Endothelial cell of umbilical vein (primary cell): ENCODE measurements at regions of chr6 and their contacts with region 1.

Region 1: GRCh38 chr6:151044465-151045441 is 179.3 kb downstream of the MTHFD1L start:
- DNase-seq: peak; percentile 97
- H3K4me3 ChIP-seq: no peak overlapping the region
- H3K27ac ChIP-seq: peak overlapping the region; percentile 100
- H3K4me1 ChIP-seq: peaks cover 49% of the 10 kb centered on the region
- H3K27me3 ChIP-seq: no peaks in the 10 kb centered on the region
- CTCF ChIP-seq: no peak
- POLR2A ChIP-seq: peak; percentile 44

Region 2: DNA sequence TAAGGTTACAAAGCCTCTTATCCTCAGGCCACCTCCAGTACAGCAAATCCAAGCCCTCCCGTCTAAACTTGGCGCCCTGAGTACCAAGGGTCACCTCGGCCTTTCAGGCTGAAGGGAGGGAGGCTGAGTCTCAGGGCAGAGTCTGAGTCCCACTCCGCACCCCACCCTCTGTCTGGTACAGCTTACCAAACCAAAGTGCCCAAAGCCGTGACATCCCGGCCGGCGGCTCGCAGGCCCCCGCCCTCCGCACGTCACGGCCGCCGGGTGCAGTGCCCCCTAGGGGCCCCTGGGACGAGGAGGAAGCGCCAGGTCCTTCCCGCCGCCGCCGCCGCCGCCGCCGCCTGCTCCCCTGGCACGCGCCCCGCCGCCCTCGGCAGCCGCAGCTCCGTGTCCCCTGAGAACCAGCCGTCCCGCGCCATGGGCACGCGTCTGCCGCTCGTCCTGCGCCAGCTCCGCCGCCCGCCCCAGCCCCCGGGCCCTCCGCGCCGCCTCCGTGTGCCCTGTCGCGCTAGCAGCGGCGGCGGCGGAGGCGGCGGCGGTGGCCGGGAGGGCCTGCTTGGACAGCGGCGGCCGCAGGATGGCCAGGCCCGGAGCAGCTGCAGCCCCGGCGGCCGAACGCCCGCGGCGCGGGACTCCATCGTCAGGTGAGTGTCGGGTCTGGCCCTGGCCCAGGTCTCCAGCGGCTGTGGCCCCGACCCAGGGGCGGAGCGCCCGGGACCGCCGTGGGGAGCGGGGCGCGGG is 179.2 kb before region 1 on chr6 and contains the start of gene MTHFD1L:
- CTCF ChIA-PET with region 1: no interaction called
- POLR2A ChIA-PET with region 1: no interaction called
- dilution Hi-C with region 1: no loop called
- intact Hi-C with region 1: loop called (anchors 2 kb)
- DNase-seq: peak; percentile 86
- H3K4me3 ChIP-seq: peak within 1 kb of the TSS; percentile 90 to 93 (median 92)
- H3K27ac ChIP-seq: peak within 1 kb of the TSS; percentile 93
- H3K4me1 ChIP-seq: peaks cover 25% of the 10 kb centered on the region
- H3K27me3 ChIP-seq: no peaks in the 10 kb centered on the region
- CTCF ChIP-seq: peak; percentile 58 to 62
- POLR2A ChIP-seq: peak; percentile 60
- total RNA-seq, gene MTHFD1L: 120 and 121 TPM in 2 replicates

Region 3: DNA sequence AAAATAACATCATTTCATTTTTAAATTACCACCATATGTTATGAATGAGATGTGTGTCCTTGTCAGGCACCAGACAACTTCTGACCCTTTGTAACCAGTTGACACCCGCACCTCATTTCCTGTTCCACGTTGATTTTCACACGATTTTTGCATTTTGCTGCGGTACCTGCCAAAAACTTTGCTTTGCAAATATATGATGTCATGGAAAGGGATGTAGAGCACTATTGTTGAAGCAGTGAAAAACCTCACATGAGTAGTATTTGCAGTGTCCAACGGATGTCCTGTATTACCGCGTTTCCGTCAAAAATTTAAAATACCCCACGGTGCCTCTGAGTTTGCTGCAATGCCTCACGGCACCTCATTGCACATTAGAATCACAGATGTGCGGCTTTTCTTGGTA is 63.7 kb before region 1 on chr6:
- CTCF ChIA-PET with region 1: no interaction called
- POLR2A ChIA-PET with region 1: no interaction called
- dilution Hi-C with region 1: no loop called
- intact Hi-C with region 1: loop called (anchors 1 kb)
- DNase-seq: peak; percentile 99
- H3K4me3 ChIP-seq: no peak overlapping the region
- H3K27ac ChIP-seq: peak overlapping the region; percentile 90
- H3K4me1 ChIP-seq: peaks cover 26% of the 10 kb centered on the region
- H3K27me3 ChIP-seq: no peaks in the 10 kb centered on the region
- CTCF ChIP-seq: no peak
- POLR2A ChIP-seq: no peak

Region 4: GRCh38 chr6:151014404-151015100 is 30.2 kb before region 1 on chr6:
- CTCF ChIA-PET with region 1: interaction called, 9 read pairs
- POLR2A ChIA-PET with region 1: no interaction called
- dilution Hi-C with region 1: no loop called
- intact Hi-C with region 1: loop called (anchors 1 kb)
- DNase-seq: peak; percentile 80
- H3K4me3 ChIP-seq: no peak overlapping the region
- H3K27ac ChIP-seq: peak overlapping the region; percentile 90
- H3K4me1 ChIP-seq: peaks cover 35% of the 10 kb centered on the region
- H3K27me3 ChIP-seq: no peaks in the 10 kb centered on the region
- CTCF ChIP-seq: peak; percentile 91 to 94
- POLR2A ChIP-seq: no peak

Region 5: DNA sequence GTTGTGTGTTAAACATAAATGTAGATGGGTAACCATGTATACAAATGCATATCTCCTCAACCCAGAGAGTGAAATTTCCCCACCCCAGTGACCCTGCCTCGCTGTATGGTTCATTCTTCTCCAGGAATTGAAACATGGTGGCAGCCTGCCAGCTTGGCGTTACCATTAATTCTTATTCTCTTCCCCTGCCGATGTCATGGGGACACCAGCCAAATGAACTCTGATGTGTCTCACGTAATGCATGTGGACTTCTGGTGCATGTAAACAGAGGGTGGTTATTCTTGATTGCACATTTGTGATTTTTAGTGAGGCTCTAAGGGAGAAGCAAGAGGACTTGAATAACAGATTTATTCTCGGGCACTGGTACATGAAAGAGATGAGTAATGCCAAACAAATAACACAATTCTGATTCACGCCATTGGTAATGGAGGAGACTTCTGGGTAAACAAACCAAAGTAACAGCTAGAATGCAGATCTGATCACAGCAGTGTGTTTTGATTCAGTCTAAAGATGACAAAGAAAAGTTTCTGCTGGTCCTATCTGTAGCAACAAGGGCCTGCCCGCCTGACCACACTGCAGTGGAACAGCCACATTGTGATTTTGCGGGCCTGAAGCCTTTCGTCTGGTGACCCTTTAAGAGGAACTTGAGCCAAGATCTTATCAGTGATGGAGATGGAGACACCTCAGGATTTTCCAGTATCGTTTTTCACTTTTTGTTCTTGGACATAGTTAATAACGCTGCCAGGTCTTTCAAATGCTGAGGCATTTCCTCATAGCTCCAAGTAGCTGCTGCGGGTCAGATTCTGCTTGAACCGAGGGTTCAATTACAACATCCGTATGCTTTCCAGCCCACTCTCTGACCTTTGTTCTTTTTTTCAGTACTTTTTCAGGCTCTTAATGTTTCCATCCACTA is 23.2 kb after region 1 on chr6:
- CTCF ChIA-PET with region 1: interaction called, 8 read pairs
- POLR2A ChIA-PET with region 1: interaction called, 3 read pairs
- dilution Hi-C with region 1: no loop called
- intact Hi-C with region 1: loop called (anchors 1 kb)
- DNase-seq: peak; percentile 99
- H3K4me3 ChIP-seq: no peak overlapping the region
- H3K27ac ChIP-seq: peak overlapping the region; percentile 90
- H3K4me1 ChIP-seq: peaks cover 61% of the 10 kb centered on the region
- H3K27me3 ChIP-seq: no peaks in the 10 kb centered on the region
- CTCF ChIP-seq: no peak
- POLR2A ChIP-seq: peak; percentile 47

Region 6: GRCh38 chr6:151240036-151240685 is 195.4 kb after region 1 on chr6:
- CTCF ChIA-PET with region 1: interaction called, 3 read pairs
- POLR2A ChIA-PET with region 1: no interaction called
- dilution Hi-C with region 1: no loop called
- intact Hi-C with region 1: loop called (anchors 1 kb)
- DNase-seq: peak; percentile 73
- H3K4me3 ChIP-seq: peak overlapping the region; percentile 64 to 96 (median 69)
- H3K27ac ChIP-seq: peak overlapping the region; percentile 59
- H3K4me1 ChIP-seq: peaks cover 30% of the 10 kb centered on the region
- H3K27me3 ChIP-seq: no peaks in the 10 kb centered on the region
- CTCF ChIP-seq: peak in 1 of 2 donors; percentile 17
- POLR2A ChIP-seq: peak; percentile 79

Region 7: DNA sequence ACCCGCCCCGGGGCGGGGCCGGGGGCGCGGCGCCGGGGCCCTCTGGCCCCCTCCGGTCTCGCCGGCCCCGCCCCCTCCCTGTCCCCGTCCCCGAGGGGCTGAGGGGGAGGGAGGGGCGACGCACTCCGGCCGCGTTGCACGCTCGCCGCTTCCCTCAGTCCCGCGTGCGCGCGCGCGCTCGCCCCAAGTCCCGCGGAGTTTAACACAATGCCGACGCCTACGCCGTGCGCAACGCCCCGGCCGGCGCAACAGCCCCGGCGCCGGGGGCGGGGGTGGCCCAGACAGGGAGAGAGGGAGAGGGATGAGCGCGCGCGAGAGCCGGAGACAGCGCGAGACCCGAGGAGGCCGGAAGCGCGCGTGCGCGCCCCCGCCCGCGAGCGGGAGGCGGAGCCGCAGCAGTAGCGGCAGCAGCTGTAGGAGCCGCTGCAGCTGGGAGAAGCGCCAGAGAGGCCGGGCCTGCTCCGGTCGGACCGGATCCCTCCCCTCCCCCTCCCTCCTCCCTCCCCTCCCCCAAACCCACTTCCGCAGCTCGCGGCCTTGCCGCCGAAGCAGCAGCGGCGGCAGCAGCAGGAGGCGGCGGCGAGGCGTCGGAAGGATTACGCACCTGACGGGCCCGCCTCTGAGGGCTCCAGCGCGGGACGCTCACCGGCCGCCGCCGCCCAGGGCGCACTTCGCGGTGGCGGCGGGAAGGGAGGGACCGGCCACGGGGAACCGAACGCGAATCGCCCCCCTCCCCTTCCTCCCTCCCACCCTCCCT is 345.7 kb after region 1 on chr6:
- CTCF ChIA-PET with region 1: no interaction called
- POLR2A ChIA-PET with region 1: no interaction called
- dilution Hi-C with region 1: no loop called
- intact Hi-C with region 1: loop called (anchors 2 kb)
- DNase-seq: peak; percentile 99
- H3K4me3 ChIP-seq: peak overlapping the region; percentile 17 to 93 (median 86)
- H3K27ac ChIP-seq: peak overlapping the region; percentile 94
- H3K4me1 ChIP-seq: peaks cover 28% of the 10 kb centered on the region
- H3K27me3 ChIP-seq: no peaks in the 10 kb centered on the region
- CTCF ChIP-seq: peak in 1 of 2 donors; percentile 4
- POLR2A ChIP-seq: peak; percentile 80